ENCODE measurements at regions of chr1 and their contacts with region 1.

Region 1: GRCh38 chr1:28736450-28737306 is at the start of gene YTHDF2:
- DNase-seq: peak; percentile 95 to 98 (median 98)
- ATAC-seq: peak; percentile 97
- H3K4me3 ChIP-seq: peak within 1 kb of the TSS; percentile 88
- H3K4me3 Mint-ChIP-seq: peak within 1 kb of the TSS; percentile 92 to 100 (median 98)
- H3K27ac ChIP-seq: peak within 1 kb of the TSS; percentile 92
- H3K27ac Mint-ChIP-seq: peak within 1 kb of the TSS; percentile 93 to 98 (median 95)
- H3K4me1 ChIP-seq: peaks cover 26% of the 10 kb centered on the region in 2 donors
- H3K4me1 Mint-ChIP-seq: peaks cover 15 to 49% (median 34%) of the 10 kb centered on the region in 7 donors
- H3K27me3 ChIP-seq: no peaks in the 10 kb centered on the region
- H3K27me3 Mint-ChIP-seq: no peaks in the 10 kb centered on the region
- total RNA-seq, gene YTHDF2: 64.5 to 72.0 (median 71.5) TPM

Region 2: DNA sequence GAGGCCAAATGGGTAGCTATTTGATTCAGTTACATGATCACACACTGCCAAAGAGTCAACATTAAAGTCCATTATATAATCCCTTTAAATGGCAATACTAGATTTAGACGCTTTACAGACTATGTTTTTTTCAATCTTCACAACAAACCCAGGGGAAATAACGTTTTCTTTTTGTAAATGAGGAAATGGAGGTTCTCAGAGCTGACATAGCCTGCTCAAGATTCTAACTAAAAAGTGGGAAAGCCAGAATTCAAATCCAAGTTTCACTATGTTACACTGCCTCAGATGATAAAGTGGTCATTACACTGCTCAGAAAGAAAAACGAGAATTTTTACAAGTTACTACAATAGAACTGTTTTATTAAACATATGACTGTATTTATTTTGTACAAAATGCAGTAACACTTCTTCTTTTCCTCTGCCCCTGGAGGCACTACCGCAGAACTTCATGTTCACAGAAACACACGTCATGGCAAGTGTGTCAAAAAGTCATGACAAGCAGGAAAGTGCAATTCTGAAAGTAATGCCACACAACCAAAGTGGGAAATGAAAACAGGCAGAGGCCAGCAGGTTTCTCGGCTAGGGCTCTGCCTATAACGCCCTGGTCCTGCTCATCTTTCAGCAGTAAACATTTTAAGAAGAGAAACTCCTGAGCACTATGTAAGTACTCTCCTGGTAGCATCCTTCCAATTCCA is 845.3 kb before region 1 on chr1:
- CTCF ChIA-PET with region 1: no interaction called
- POLR2A ChIA-PET with region 1: no interaction called
- intact Hi-C with region 1: no loop called
- DNase-seq: peak in 6 of 9 donors; percentile 16 to 59 (median 38)
- ATAC-seq: peak; percentile 78
- H3K4me3 ChIP-seq: no peak overlapping the region
- H3K4me3 Mint-ChIP-seq: peak overlapping the region in 9 of 10 donors; percentile 8 to 69 (median 42)
- H3K27ac ChIP-seq: peak overlapping the region; percentile 58
- H3K27ac Mint-ChIP-seq: peak overlapping the region; percentile 33 to 96 (median 88)
- H3K4me1 ChIP-seq: peaks cover 29 to 40% of the 10 kb centered on the region in 2 donors
- H3K4me1 Mint-ChIP-seq: peaks cover 27 to 78% (median 64%) of the 10 kb centered on the region in 7 donors
- H3K27me3 ChIP-seq: no peaks in the 10 kb centered on the region
- H3K27me3 Mint-ChIP-seq: no peaks in the 10 kb centered on the region

Region 3: GRCh38 chr1:28259307-28260167 is 477.1 kb before region 1 on chr1 and contains the start of gene SESN2:
- CTCF ChIA-PET with region 1: no interaction called
- POLR2A ChIA-PET with region 1: no interaction called
- intact Hi-C with region 1: loop called in 1 of 2 experiments (anchors 1 kb)
- DNase-seq: peak; percentile 97 to 99 (median 99)
- ATAC-seq: peak; percentile 98
- H3K4me3 ChIP-seq: peak within 1 kb of the TSS; percentile 95
- H3K4me3 Mint-ChIP-seq: peak within 1 kb of the TSS; percentile 65 to 90 (median 82)
- H3K27ac ChIP-seq: peak within 1 kb of the TSS; percentile 77
- H3K27ac Mint-ChIP-seq: peak within 1 kb of the TSS; percentile 58 to 96 (median 74)
- H3K4me1 ChIP-seq: peaks cover 38 to 47% of the 10 kb centered on the region in 2 donors
- H3K4me1 Mint-ChIP-seq: peaks cover 32 to 54% (median 49%) of the 10 kb centered on the region in 7 donors
- H3K27me3 ChIP-seq: no peaks in the 10 kb centered on the region
- H3K27me3 Mint-ChIP-seq: peaks cover 0 to 2% (median 0%) of the 10 kb centered on the region in 5 donors
- total RNA-seq, gene SESN2: 4.5 to 50.7 (median 11.8) TPM

Region 4: GRCh38 chr1:28505406-28506187 is 231.1 kb before region 1 on chr1 and contains the start of gene RCC1:
- CTCF ChIA-PET with region 1: interaction called, 3 read pairs
- POLR2A ChIA-PET with region 1: interaction called, 4 read pairs
- intact Hi-C with region 1: loop called (anchors 1 kb)
- DNase-seq: peak; percentile 78 to 98 (median 96)
- ATAC-seq: peak; percentile 97
- H3K4me3 ChIP-seq: peak within 1 kb of the TSS; percentile 79
- H3K4me3 Mint-ChIP-seq: peak within 1 kb of the TSS; percentile 94 to 100 (median 99)
- H3K27ac ChIP-seq: peak within 1 kb of the TSS; percentile 88
- H3K27ac Mint-ChIP-seq: peak within 1 kb of the TSS; percentile 96 to 100 (median 99)
- H3K4me1 ChIP-seq: peaks cover 29 to 36% of the 10 kb centered on the region in 2 donors
- H3K4me1 Mint-ChIP-seq: peaks cover 29 to 48% (median 41%) of the 10 kb centered on the region in 7 donors
- H3K27me3 ChIP-seq: no peaks in the 10 kb centered on the region
- H3K27me3 Mint-ChIP-seq: peaks cover 0 to 3% (median 0%) of the 10 kb centered on the region in 5 donors
- total RNA-seq, gene RCC1: 9.8 to 60.7 (median 19.7) TPM

Region 5: DNA sequence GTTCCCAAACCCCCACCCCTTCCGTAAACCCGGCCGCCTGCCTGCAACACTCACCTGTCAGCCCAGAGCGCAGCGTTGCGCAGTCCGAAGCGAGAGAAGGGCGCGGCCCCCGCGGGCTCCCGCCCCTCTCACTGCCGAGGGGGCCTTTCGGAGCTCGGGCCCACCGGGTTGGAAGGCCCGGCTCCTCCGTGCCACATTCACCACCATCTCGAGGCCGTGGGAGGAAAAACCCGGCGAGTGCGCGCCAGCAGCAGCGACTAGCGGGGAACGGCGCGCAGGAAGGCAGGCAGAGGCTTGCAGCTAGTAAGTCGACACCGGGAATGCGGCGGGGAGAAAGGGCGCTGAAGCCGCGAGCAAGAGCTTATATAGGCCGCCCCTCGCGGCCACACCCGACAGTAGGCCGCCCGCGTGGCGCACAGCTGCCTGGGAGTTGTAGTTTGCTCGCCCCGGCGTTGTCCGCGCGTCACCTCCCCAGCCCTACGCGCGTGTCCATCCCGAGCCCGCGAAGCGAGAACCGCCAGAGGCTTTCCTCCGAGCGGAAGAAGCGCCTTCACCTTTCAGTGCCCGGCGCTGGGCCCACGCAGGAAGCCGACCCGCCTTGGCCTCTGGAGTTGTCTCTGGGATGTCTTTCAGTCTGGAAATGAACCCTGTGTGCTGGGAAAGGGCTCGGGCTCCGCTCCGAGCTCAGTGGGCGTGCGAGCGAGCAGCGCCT is 155.0 kb before region 1 on chr1:
- CTCF ChIA-PET with region 1: interaction called, 5 read pairs
- POLR2A ChIA-PET with region 1: interaction called, 17 read pairs
- intact Hi-C with region 1: loop called (anchors 1 kb)
- DNase-seq: peak; percentile 85 to 96 (median 91)
- ATAC-seq: peak; percentile 95
- H3K4me3 ChIP-seq: peak overlapping the region; percentile 93
- H3K4me3 Mint-ChIP-seq: peak overlapping the region; percentile 94 to 99 (median 97)
- H3K27ac ChIP-seq: peak overlapping the region; percentile 84
- H3K27ac Mint-ChIP-seq: peak overlapping the region; percentile 86 to 96 (median 93)
- H3K4me1 ChIP-seq: peaks cover 20 to 23% of the 10 kb centered on the region in 2 donors
- H3K4me1 Mint-ChIP-seq: peaks cover 22 to 48% (median 37%) of the 10 kb centered on the region in 7 donors
- H3K27me3 ChIP-seq: no peaks in the 10 kb centered on the region
- H3K27me3 Mint-ChIP-seq: no peaks in the 10 kb centered on the region

Region 6: GRCh38 chr1:28668191-28668955 is 68.3 kb before region 1 on chr1 and contains the start of gene GMEB1:
- CTCF ChIA-PET with region 1: interaction called, 6 read pairs
- POLR2A ChIA-PET with region 1: interaction called, 67 read pairs
- intact Hi-C with region 1: loop called (anchors 1 kb)
- DNase-seq: peak; percentile 70 to 91 (median 82)
- ATAC-seq: peak; percentile 81
- H3K4me3 ChIP-seq: peak within 1 kb of the TSS; percentile 81
- H3K4me3 Mint-ChIP-seq: peak within 1 kb of the TSS; percentile 89 to 97 (median 94)
- H3K27ac ChIP-seq: peak within 1 kb of the TSS; percentile 98
- H3K27ac Mint-ChIP-seq: peak within 1 kb of the TSS; percentile 94 to 100 (median 98)
- H3K4me1 ChIP-seq: peaks cover 3 to 6% of the 10 kb centered on the region in 2 donors
- H3K4me1 Mint-ChIP-seq: peaks cover 11 to 37% (median 25%) of the 10 kb centered on the region in 7 donors
- H3K27me3 ChIP-seq: no peaks in the 10 kb centered on the region
- H3K27me3 Mint-ChIP-seq: no peaks in the 10 kb centered on the region
- total RNA-seq, gene GMEB1: 15.8 to 26.7 (median 18.4) TPM

Region 7: DNA sequence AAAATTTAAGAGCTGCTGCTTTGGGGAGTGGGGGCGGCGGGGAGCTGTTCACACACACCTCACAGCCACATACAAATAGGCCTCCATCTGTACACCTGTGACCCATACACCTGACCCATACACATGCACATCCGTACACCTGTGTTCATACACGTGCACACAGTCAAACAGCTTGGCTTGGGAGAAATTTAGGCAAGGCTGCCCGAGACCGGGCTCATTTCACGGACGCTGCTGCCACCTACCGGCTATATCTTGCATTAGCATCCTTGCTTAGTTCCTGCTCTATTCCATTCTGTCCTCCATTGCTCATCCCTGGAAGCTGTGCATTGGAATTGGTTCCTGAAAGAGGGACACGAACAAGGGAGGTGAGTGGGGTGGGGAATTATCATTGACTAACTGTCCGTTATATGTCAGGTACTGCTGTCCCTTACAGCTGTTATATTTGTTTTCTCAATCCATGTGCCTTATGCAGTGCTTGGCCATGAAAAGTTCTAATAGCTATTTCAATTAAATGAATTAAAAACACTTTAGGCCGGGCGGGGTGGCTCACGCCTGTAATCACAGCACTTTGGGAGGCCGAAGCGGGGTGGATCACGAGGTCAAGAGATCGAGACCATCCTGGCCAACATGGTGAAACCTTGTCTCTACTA is 140.6 kb after region 1 on chr1:
- CTCF ChIA-PET with region 1: no interaction called
- POLR2A ChIA-PET with region 1: no interaction called
- intact Hi-C with region 1: loop called in 1 of 2 experiments (anchors 2 kb)
- DNase-seq: peak; percentile 48 to 77 (median 67)
- ATAC-seq: peak; percentile 86
- H3K4me3 ChIP-seq: no peak overlapping the region
- H3K4me3 Mint-ChIP-seq: peak overlapping the region in 1 of 10 donors; percentile 32
- H3K27ac ChIP-seq: no peak overlapping the region
- H3K27ac Mint-ChIP-seq: no peak overlapping the region
- H3K4me1 ChIP-seq: no peaks in the 10 kb centered on the region
- H3K4me1 Mint-ChIP-seq: peaks cover 4 to 16% (median 7%) of the 10 kb centered on the region in 7 donors
- H3K27me3 ChIP-seq: no peaks in the 10 kb centered on the region
- H3K27me3 Mint-ChIP-seq: peaks cover 0 to 17% (median 5%) of the 10 kb centered on the region in 5 donors

Region 8: GRCh38 chr1:28971980-28972771 is 235.5 kb after region 1 on chr1:
- CTCF ChIA-PET with region 1: no interaction called
- POLR2A ChIA-PET with region 1: no interaction called
- intact Hi-C with region 1: no loop called
- DNase-seq: no peak
- ATAC-seq: no peak
- H3K4me3 ChIP-seq: no peak overlapping the region
- H3K4me3 Mint-ChIP-seq: peak overlapping the region in 7 of 10 donors; percentile 19 to 53 (median 31)
- H3K27ac ChIP-seq: no peak overlapping the region
- H3K27ac Mint-ChIP-seq: peak overlapping the region in 8 of 9 donors; percentile 20 to 82 (median 58)
- H3K4me1 ChIP-seq: peaks cover 6 to 17% of the 10 kb centered on the region in 2 donors
- H3K4me1 Mint-ChIP-seq: peaks cover 32 to 87% (median 66%) of the 10 kb centered on the region in 7 donors
- H3K27me3 ChIP-seq: no peaks in the 10 kb centered on the region
- H3K27me3 Mint-ChIP-seq: no peaks in the 10 kb centered on the region

Region 9: DNA sequence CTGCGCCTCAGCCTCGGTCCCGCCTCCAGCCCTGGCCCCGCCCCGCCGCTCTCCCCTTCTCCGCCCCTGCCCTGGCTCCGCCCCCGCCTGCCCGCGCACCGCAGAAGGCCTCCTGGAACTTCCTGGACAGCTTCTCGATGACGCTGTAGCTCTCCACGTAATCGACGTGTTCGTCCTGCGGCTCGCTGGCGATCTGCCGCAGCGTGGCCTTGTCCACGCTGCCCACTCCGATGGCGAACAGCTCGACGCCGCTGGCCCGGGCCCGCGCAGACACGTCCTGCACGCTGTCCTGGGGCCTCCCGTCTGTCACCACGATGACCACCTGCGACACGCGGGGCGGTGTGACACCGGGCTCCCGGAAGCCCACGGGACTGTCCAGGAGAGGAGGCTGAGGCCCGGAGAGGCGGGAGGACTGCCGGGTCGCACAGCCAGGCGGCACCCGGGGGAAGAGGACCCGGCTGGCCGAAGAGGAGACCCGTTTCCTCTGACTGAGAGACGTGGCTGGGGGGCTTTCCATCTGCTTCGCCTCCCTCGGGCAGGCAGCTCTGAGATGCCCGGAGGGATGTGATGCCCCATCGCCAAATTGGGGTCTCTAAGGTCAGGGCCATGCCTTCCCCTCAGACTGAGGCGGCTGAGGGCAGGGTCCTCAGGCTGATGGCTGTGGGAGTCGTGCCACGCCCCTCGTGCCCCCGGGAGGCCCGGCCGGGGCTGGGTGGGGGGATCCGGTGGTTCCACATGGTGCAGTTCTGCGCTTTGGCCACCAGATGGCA is 1982.1 kb after region 1 on chr1:
- CTCF ChIA-PET with region 1: no interaction called
- POLR2A ChIA-PET with region 1: no interaction called
- intact Hi-C with region 1: loop called in 1 of 2 experiments (anchors 2 kb)
- DNase-seq: peak; percentile 75 to 97 (median 96)
- ATAC-seq: peak; percentile 78
- H3K4me3 ChIP-seq: peak overlapping the region; percentile 88
- H3K4me3 Mint-ChIP-seq: peak overlapping the region; percentile 83 to 96 (median 91)
- H3K27ac ChIP-seq: peak overlapping the region; percentile 100
- H3K27ac Mint-ChIP-seq: peak overlapping the region; percentile 86 to 97 (median 94)
- H3K4me1 ChIP-seq: peaks cover 10 to 37% of the 10 kb centered on the region in 2 donors
- H3K4me1 Mint-ChIP-seq: peaks cover 18 to 49% (median 38%) of the 10 kb centered on the region in 7 donors
- H3K27me3 ChIP-seq: no peaks in the 10 kb centered on the region
- H3K27me3 Mint-ChIP-seq: no peaks in the 10 kb centered on the region